ENCODE measurements at regions of chr4 and their contacts with region 1.

Region 1: DNA sequence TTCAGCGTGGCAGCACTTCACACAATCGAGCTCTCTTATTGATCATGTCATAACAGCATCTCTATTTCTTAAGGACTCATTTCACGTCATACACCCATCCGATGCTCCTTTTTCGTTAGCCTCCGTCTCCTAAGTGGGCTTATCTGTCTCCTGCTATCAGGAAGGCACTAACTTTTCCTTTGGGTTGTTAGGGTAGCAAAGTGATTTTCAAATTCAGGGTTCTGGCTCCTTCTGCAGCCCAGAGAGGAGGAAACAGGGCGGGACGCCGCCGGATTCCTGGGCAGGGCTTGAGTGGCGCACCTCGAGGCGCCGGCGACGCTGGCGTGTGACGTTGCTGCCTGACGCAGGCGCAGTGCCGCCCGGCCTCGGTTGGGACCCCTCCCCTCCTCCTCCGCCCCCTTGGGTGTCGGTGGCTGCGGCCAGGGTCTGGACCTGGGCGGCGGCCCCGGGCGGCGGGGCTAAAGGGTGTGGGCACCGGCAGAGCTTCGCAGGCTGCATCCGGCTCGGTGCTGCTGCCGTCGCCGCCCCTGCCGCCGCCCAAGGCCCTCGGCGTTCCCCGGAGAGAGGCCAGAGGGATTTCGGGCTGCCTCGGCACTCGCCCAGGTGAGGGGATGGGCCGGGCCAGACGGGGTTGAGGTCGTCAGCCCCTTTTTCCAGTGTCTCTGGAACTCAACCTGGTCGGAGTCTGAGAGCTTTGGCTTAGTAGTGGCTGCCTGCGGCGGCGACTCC is at the start of gene BLTP1:
- DNase-seq: peak; percentile 85 to 89 (median 88)
- H3K4me3 ChIP-seq: peak within 1 kb of the TSS; percentile 73 to 92
- H3K4me3 Mint-ChIP-seq: peak within 1 kb of the TSS; percentile 92 to 100 (median 96)
- H3K27ac ChIP-seq: peak within 1 kb of the TSS; percentile 85
- H3K27ac Mint-ChIP-seq: peak within 1 kb of the TSS; percentile 92 to 100 (median 99)
- H3K4me1 ChIP-seq: peaks cover 63% of the 10 kb centered on the region
- H3K4me1 Mint-ChIP-seq: peaks cover 51 to 84% (median 64%) of the 10 kb centered on the region in 4 donors
- H3K27me3 ChIP-seq: no peaks in the 10 kb centered on the region
- H3K27me3 Mint-ChIP-seq: no peaks in the 10 kb centered on the region
- total RNA-seq, gene BLTP1: 83.9 to 87.5 TPM

Region 2: GRCh38 chr4:121869841-121870656 is 282.1 kb before region 1 on chr4 and contains the start of gene BBS7:
- CTCF ChIA-PET with region 1: no interaction called
- POLR2A ChIA-PET with region 1: interaction called, 3 read pairs
- intact Hi-C with region 1: loop called (anchors 5 kb)
- DNase-seq: peak; percentile 88 to 95 (median 89)
- H3K4me3 ChIP-seq: peak within 1 kb of the TSS; percentile 92 to 97
- H3K4me3 Mint-ChIP-seq: peak within 1 kb of the TSS; percentile 91 to 98 (median 96)
- H3K27ac ChIP-seq: peak within 1 kb of the TSS; percentile 81
- H3K27ac Mint-ChIP-seq: peak within 1 kb of the TSS; percentile 79 to 98 (median 94)
- H3K4me1 ChIP-seq: peaks cover 19% of the 10 kb centered on the region
- H3K4me1 Mint-ChIP-seq: peaks cover 9 to 30% (median 16%) of the 10 kb centered on the region in 4 donors
- H3K27me3 ChIP-seq: peaks cover 6% of the 10 kb centered on the region
- H3K27me3 Mint-ChIP-seq: peaks cover 4 to 6% of the 10 kb centered on the region in 2 donors
- total RNA-seq, gene BBS7: 8.8 to 10.1 TPM

Region 3: GRCh38 chr4:122117743-122118142 is 34.4 kb before region 1 on chr4:
- CTCF ChIA-PET with region 1: no interaction called
- POLR2A ChIA-PET with region 1: interaction called, 14 read pairs
- intact Hi-C with region 1: loop called (anchors 5 kb)
- DNase-seq: peak; percentile 18 to 48 (median 24)
- H3K4me3 ChIP-seq: no peak overlapping the region
- H3K4me3 Mint-ChIP-seq: peak overlapping the region in 7 of 8 donors; percentile 15 to 73 (median 40)
- H3K27ac ChIP-seq: no peak overlapping the region
- H3K27ac Mint-ChIP-seq: peak overlapping the region; percentile 24 to 93 (median 67)
- H3K4me1 ChIP-seq: peaks cover 25% of the 10 kb centered on the region
- H3K4me1 Mint-ChIP-seq: peaks cover 20 to 29% (median 24%) of the 10 kb centered on the region in 4 donors
- H3K27me3 ChIP-seq: no peaks in the 10 kb centered on the region
- H3K27me3 Mint-ChIP-seq: no peaks in the 10 kb centered on the region

Region 4: GRCh38 chr4:122131562-122132157 is 20.5 kb before region 1 on chr4:
- CTCF ChIA-PET with region 1: interaction called, 4 read pairs
- POLR2A ChIA-PET with region 1: interaction called, 40 read pairs
- intact Hi-C with region 1: loop called (anchors 2 kb)
- DNase-seq: peak in 4 of 5 donors; percentile 43 to 62 (median 53)
- H3K4me3 ChIP-seq: no peak overlapping the region
- H3K4me3 Mint-ChIP-seq: peak overlapping the region; percentile 13 to 74 (median 54)
- H3K27ac ChIP-seq: peak overlapping the region; percentile 11
- H3K27ac Mint-ChIP-seq: peak overlapping the region; percentile 28 to 95 (median 89)
- H3K4me1 ChIP-seq: peaks cover 21% of the 10 kb centered on the region
- H3K4me1 Mint-ChIP-seq: peaks cover 16 to 34% (median 22%) of the 10 kb centered on the region in 4 donors
- H3K27me3 ChIP-seq: no peaks in the 10 kb centered on the region
- H3K27me3 Mint-ChIP-seq: no peaks in the 10 kb centered on the region